ENCODE measurements at regions of chr3 and their contacts with region 1.

Region 1: DNA sequence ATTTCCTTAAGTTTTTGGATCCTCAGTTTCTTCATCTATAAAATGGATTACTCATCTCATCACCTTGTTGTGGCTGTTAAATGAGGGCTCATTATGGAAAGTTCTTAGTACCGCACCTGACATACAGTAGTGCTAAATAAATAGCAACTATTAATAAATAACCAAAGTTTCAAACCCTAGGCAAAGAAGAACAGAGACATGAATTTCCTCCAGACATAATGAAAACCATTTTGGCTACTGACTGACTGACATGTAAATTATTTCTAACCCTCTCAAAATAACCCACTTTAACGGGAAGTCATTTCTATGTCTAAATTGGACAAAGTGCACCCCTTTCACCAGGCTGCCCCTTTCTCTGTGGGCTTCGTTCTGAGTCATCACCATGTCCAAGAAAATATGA is 17.4 kb upstream of the KLHL6 start:
- DNase-seq: no peak
- H3K4me3 ChIP-seq: no peak overlapping the region
- H3K27ac ChIP-seq: no peak overlapping the region
- H3K4me1 ChIP-seq: no peaks in the 10 kb centered on the region
- H3K27me3 ChIP-seq: no peaks in the 10 kb centered on the region
- CTCF ChIP-seq: no peak
- EP300 ChIP-seq: no peak
- POLR2A ChIP-seq: no peak

Region 2: DNA sequence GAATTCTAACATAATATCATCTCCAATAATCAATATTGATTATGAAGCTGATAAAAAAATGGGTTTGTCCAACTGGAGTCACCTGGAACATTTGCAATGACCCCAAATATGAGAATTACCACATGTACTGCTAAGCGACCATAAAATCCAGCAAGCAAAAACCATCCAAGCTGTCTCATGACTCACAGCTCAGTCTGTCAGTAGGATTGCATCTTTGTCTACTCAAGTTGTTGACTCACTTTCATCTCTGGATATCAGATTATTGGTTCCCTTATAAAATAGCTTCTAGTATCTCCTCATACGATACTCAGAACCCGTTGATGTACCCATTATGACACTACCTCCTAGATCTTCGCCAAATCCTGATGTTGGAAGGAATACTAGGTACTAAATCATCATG is 989.4 kb before region 1 on chr3:
- intact Hi-C with region 1: loop called in 1 of 4 experiments (anchors 5 kb)
- DNase-seq: no peak
- H3K4me3 ChIP-seq: no peak overlapping the region
- H3K27ac ChIP-seq: no peak overlapping the region
- H3K4me1 ChIP-seq: no peaks in the 10 kb centered on the region
- H3K27me3 ChIP-seq: no peaks in the 10 kb centered on the region
- CTCF ChIP-seq: no peak
- EP300 ChIP-seq: no peak
- POLR2A ChIP-seq: no peak

Region 3: DNA sequence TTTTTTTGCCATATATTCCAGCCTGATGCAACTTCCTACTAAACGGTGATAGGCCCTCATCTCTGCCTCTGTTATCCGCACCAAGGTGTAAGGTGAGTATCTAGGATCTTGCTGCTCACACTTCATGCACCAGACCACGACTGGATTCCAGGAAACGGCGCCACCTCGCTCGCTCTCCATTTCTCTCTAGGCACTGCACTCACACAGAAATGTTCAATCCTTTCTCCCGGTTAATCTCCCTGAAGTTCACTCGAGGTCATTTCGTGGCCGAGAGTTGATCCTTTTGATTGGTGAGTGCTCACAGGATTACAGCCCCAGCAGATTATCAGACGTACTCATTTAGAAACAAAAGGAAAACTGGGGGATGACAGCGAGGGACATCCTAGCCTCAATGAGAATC is 172.6 kb before region 1 on chr3:
- intact Hi-C with region 1: no loop called
- DNase-seq: no peak
- H3K4me3 ChIP-seq: no peak overlapping the region
- H3K27ac ChIP-seq: no peak overlapping the region
- H3K4me1 ChIP-seq: no peaks in the 10 kb centered on the region
- H3K27me3 ChIP-seq: no peaks in the 10 kb centered on the region
- CTCF ChIP-seq: no peak
- EP300 ChIP-seq: no peak
- POLR2A ChIP-seq: no peak